CD14-positive monocyte (primary cell): ENCODE measurements at regions of chr1 and their contacts with region 1.

Region 1: GRCh38 chr1:7808253-7808844 is 24.3 kb downstream of the PER3 start:
- DNase-seq: peak in 2 of 3 donors; percentile 31 to 36
- H3K4me3 ChIP-seq: no peak overlapping the region
- H3K4me3 Mint-ChIP-seq: no peak overlapping the region
- H3K27ac ChIP-seq: no peak overlapping the region
- H3K27ac Mint-ChIP-seq: peak overlapping the region in 1 of 7 donors; percentile 50
- H3K4me1 ChIP-seq: no peaks in the 10 kb centered on the region
- H3K4me1 Mint-ChIP-seq: peaks cover 6% of the 10 kb centered on the region
- H3K27me3 ChIP-seq: no peaks in the 10 kb centered on the region
- H3K27me3 Mint-ChIP-seq: peaks cover 0 to 1% (median 0%) of the 10 kb centered on the region in 3 donors
- CTCF ChIP-seq: peak; percentile 73

Region 2: DNA sequence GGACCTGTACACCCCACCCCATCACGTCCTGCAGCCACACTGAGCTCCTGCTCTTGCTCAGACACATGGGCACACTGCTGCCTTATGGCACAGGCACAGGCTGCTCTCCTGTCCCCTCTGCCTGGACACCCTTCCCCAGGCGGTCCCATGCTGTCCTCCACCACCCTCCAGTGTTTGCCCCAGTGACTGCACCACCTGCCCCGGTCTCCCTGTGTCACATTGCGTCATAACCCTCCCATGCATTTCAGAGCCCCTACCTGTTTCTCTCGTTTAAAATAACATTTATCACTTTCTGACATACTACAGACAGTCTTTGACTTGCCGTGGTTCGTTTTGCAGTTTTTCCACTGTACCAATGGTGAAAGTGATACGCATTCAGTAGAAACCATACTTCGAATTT is 863.9 kb before region 1 on chr1:
- intact Hi-C with region 1: no loop called
- DNase-seq: no peak
- H3K4me3 ChIP-seq: no peak overlapping the region
- H3K4me3 Mint-ChIP-seq: no peak overlapping the region
- H3K27ac ChIP-seq: no peak overlapping the region
- H3K27ac Mint-ChIP-seq: no peak overlapping the region
- H3K4me1 ChIP-seq: no peaks in the 10 kb centered on the region
- H3K4me1 Mint-ChIP-seq: no peaks in the 10 kb centered on the region
- H3K27me3 ChIP-seq: no peaks in the 10 kb centered on the region
- H3K27me3 Mint-ChIP-seq: peaks cover 0 to 9% (median 2%) of the 10 kb centered on the region in 3 donors
- CTCF ChIP-seq: no peak

Region 3: DNA sequence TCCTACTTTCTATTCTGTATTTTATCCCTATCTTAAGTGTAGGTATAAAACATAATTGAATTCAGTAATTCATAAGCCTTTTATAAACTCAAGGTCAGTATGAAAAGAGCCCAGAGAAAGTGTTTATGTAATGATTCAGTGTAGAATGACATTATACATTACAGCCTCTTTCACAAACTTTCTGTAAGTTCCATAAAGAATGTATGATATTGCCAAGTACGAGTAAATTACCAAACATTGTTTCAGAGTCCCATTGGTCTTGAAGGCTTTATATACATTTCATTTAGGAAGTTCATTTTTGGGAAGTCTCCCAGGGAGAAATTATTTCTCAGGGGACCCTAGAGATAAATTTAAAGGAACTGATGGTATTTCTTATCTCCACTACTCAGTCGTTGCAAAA is 75.1 kb before region 1 on chr1:
- intact Hi-C with region 1: no loop called
- DNase-seq: no peak
- H3K4me3 ChIP-seq: no peak overlapping the region
- H3K4me3 Mint-ChIP-seq: no peak overlapping the region
- H3K27ac ChIP-seq: no peak overlapping the region
- H3K27ac Mint-ChIP-seq: no peak overlapping the region
- H3K4me1 ChIP-seq: peaks cover 13 to 15% of the 10 kb centered on the region in 2 donors
- H3K4me1 Mint-ChIP-seq: peaks cover 25% of the 10 kb centered on the region
- H3K27me3 ChIP-seq: no peaks in the 10 kb centered on the region
- H3K27me3 Mint-ChIP-seq: peaks cover 1 to 3% (median 1%) of the 10 kb centered on the region in 3 donors
- CTCF ChIP-seq: no peak

Region 4: DNA sequence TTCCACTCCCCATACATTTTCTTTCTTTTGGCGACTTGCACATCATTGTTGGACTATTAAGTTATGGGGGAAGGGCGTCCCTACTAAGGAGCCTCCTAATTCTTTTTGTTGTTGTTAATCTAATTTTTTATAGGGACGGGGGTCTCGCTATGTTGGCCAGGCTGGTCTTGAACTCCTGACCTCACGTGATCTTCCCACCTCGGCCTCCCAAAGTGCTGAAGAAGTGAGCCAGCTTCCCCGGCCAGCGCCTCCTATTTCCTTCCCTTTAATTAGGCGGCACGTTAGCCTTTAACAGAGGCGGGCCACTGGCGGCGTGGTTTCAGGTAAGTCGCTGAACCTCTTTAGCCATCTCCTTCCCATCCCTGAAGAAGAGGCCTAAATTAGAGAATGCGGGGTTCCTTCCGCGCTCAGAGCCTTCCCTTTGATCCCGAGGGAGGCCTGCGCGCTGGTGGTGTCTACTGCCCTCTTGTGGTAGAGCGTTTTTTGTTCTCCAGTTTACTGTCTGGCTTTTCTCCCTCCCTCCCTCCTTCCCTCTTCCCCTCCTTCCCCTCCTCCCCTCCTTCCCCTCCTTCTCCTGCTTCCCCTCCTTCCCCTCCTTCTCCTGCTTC is 94.2 kb after region 1 on chr1:
- intact Hi-C with region 1: loop called in 1 of 2 experiments (anchors 5 kb)
- DNase-seq: peak; percentile 47 to 72 (median 67)
- H3K4me3 ChIP-seq: peak overlapping the region in 1 of 3 experiments; percentile 50
- H3K4me3 Mint-ChIP-seq: peak overlapping the region; percentile 68 to 80
- H3K27ac ChIP-seq: no peak overlapping the region
- H3K27ac Mint-ChIP-seq: peak overlapping the region in 3 of 7 donors; percentile 26 to 59 (median 30)
- H3K4me1 ChIP-seq: peaks cover 5 to 10% of the 10 kb centered on the region in 2 donors
- H3K4me1 Mint-ChIP-seq: peaks cover 17% of the 10 kb centered on the region
- H3K27me3 ChIP-seq: no peaks in the 10 kb centered on the region
- H3K27me3 Mint-ChIP-seq: peaks cover 2 to 7% (median 5%) of the 10 kb centered on the region in 3 donors
- CTCF ChIP-seq: peak; percentile 69

Region 5: DNA sequence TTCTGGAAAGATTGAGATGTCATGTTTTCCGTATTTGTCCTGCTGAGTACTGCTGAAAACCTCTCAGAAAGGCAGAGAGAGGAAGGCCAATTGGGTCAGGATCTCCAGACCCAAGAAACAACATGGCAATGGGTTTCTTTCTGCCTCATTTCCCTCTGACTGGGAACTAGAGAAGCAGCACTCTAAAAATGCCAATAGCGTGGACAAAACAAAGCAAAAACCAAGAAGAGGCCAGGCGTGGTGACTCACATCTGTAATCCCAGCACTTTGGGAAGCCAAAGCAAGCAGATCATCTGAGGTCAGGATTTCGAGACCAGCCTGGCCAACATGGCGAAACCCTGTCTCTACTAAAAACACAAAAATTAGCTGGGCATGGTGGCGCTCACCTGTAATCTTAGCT is 114.0 kb after region 1 on chr1:
- intact Hi-C with region 1: no loop called
- DNase-seq: no peak
- H3K4me3 ChIP-seq: no peak overlapping the region
- H3K4me3 Mint-ChIP-seq: no peak overlapping the region
- H3K27ac ChIP-seq: no peak overlapping the region
- H3K27ac Mint-ChIP-seq: no peak overlapping the region
- H3K4me1 ChIP-seq: peaks cover 0 to 8% of the 10 kb centered on the region in 2 donors
- H3K4me1 Mint-ChIP-seq: peaks cover 8% of the 10 kb centered on the region
- H3K27me3 ChIP-seq: no peaks in the 10 kb centered on the region
- H3K27me3 Mint-ChIP-seq: peaks cover 0 to 4% (median 3%) of the 10 kb centered on the region in 3 donors
- CTCF ChIP-seq: no peak

Region 6: GRCh38 chr1:8197493-8198282 is 389.3 kb after region 1 on chr1:
- intact Hi-C with region 1: no loop called
- DNase-seq: no peak
- H3K4me3 ChIP-seq: no peak overlapping the region
- H3K4me3 Mint-ChIP-seq: peak overlapping the region in 1 of 2 donors; percentile 48
- H3K27ac ChIP-seq: no peak overlapping the region
- H3K27ac Mint-ChIP-seq: peak overlapping the region in 2 of 7 donors; percentile 19 to 73
- H3K4me1 ChIP-seq: peaks cover 17 to 31% of the 10 kb centered on the region in 2 donors
- H3K4me1 Mint-ChIP-seq: peaks cover 44% of the 10 kb centered on the region
- H3K27me3 ChIP-seq: no peaks in the 10 kb centered on the region
- H3K27me3 Mint-ChIP-seq: peaks cover 0 to 5% (median 3%) of the 10 kb centered on the region in 3 donors
- CTCF ChIP-seq: no peak